Heart right ventricle (tissue), 16 donors: ENCODE measurements at regions of chr4 and their contacts with region 1.

Region 1: DNA sequence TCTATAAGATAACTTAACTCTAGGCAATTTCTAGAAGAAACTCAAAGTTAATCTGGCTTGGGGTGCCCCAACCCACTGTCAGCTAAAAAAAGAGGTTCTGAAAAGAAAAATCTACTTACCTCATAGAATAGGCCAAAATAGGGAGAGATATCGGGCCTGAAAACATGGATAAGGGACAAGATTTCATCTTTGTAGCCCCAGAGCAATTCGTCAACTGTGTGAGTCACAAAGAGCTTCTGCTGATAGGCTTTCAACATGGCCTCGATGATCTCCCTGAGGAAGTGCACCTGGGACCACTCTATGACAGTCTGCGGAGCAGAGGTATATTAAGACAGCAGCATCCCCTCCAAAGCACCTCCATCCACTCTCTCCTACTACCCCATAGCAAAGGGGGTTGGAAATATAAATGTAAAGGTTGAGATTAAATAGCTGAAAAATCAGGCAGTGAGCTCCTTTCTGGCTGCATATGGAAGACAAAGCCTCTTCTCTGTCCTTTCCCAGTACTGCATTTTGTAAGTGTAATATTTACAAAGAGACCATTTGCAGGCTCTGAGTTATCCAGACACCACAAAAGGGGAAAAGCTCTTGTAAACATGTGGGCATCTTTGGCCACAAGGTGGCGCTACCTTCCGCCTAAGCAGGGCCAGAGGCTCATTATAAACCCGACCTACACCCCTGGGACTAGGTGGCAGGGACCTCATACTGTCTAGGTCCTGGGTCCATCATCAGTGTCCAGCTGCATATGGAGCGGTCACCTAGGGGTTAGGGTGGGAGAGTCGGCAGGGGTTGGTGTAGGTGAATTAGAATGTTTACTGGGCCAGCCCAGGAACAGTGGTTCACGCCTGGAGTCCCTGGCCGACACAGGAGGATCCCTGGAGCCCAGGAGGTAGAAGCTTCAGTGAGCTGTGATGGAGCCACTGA is 31.5 kb upstream of the NUP54 start:
- DNase-seq: peak; percentile 82 to 83
- ATAC-seq: peak; percentile 80 to 92 (median 87)
- H3K4me3 ChIP-seq: no peak overlapping the region
- H3K27ac ChIP-seq: peak overlapping the region in 2 of 10 donors; percentile 32 to 55
- H3K4me1 ChIP-seq: peaks cover 0 to 39% (median 30%) of the 10 kb centered on the region in 9 donors
- H3K27me3 ChIP-seq: no peaks in the 10 kb centered on the region
- CTCF ChIP-seq: peak; percentile 87 to 97 (median 93)

Region 2: GRCh38 chr4:75769036-75769435 is 410.6 kb before region 1 on chr4:
- intact Hi-C with region 1: no loop called
- DNase-seq: no peak
- ATAC-seq: no peak
- H3K4me3 ChIP-seq: no peak overlapping the region
- H3K27ac ChIP-seq: no peak overlapping the region
- H3K4me1 ChIP-seq: peaks cover 0 to 11% (median 0%) of the 10 kb centered on the region in 9 donors
- H3K27me3 ChIP-seq: no peaks in the 10 kb centered on the region
- CTCF ChIP-seq: no peak

Region 3: DNA sequence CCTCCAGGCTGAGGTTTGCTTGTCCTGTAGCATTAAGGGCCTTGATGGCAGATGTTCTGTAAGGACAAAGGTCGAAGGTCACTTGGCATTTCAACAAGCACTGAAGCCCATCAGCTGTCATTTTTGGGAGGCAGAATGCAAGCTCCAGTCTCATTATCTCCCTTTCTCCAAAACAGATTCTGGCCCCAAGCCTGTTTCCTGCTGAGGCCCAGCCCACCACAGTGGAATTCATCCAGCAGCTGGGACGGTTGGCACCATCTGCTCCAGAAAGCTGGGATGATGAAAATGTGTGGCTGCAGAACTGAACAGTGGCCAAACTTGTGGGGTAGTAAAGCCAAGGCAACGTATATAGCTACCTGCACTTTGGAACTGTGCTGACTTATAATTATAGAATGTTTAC is 259.7 kb before region 1 on chr4:
- intact Hi-C with region 1: no loop called
- DNase-seq: peak in 1 of 2 donors; percentile 10
- ATAC-seq: no peak
- H3K4me3 ChIP-seq: no peak overlapping the region
- H3K27ac ChIP-seq: no peak overlapping the region
- H3K4me1 ChIP-seq: peaks cover 0 to 13% (median 0%) of the 10 kb centered on the region in 9 donors
- H3K27me3 ChIP-seq: no peaks in the 10 kb centered on the region
- CTCF ChIP-seq: no peak

Region 4: GRCh38 chr4:76246025-76246424 is 66.4 kb after region 1 on chr4:
- intact Hi-C with region 1: loop called in 5 of 10 experiments (anchors 5 to 10 kb)
- DNase-seq: no peak
- ATAC-seq: peak in 2 of 8 donors; percentile 47 to 68
- H3K4me3 ChIP-seq: no peak overlapping the region
- H3K27ac ChIP-seq: no peak overlapping the region
- H3K4me1 ChIP-seq: peaks cover 0 to 5% (median 2%) of the 10 kb centered on the region in 9 donors
- H3K27me3 ChIP-seq: peaks cover 0 to 29% (median 7%) of the 10 kb centered on the region in 7 donors
- CTCF ChIP-seq: peak in 1 of 9 donors; percentile 17

Region 5: DNA sequence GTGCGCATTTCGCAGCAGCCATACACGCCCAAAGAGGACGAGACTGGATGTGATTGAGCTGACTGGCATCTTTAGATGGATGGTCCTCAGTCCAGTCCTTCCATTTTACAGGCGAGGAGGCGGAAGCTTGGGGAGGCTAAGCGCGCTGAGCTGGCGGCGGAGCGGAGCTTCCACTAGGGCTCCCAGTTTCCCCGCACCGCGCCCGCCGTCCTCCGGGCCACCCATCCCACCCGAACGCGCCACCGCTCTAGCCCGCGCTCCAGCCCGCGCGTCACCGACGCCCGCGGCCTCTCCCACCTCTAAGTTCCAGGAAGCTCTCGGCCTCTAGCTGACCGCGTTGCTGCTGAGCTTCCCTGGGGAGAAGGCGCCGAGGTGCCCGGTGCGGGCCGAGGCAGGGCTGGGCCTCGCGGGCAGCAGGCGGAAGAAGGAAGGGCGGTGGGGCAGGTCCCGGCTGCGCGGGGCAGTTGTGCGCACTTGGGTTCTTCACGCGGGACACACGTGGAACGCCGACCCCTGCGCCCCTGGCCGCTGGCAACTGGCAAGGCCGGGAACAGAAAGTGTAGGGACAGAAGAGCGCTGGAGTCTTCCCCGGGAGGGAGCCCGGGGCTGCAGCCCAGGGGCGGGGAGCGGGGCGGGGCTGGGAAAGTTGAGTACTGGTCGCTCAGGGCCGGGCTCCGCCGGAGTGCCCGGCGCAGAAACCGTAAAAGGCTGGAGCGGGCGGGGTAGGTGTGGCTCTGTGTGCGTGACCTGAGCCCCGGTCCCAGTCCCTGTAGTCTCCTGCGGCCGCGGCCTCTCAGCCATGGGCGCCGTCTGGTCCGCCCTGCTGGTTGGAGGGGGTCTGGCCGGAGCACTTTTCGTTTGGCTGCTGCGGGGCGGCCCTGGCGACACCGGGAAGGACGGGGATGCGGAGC is 126.6 kb after region 1 on chr4 and contains the start of gene STBD1:
- intact Hi-C with region 1: loop called in 6 of 10 experiments (anchors 2 to 5 kb)
- DNase-seq: peak; percentile 74 to 85
- ATAC-seq: peak; percentile 85 to 94 (median 88)
- H3K4me3 ChIP-seq: peak within 1 kb of the TSS; percentile 57 to 90 (median 76)
- H3K27ac ChIP-seq: peak within 1 kb of the TSS; percentile 69 to 97 (median 91)
- H3K4me1 ChIP-seq: peaks cover 0 to 56% (median 37%) of the 10 kb centered on the region in 9 donors
- H3K27me3 ChIP-seq: peaks cover 0 to 7% (median 0%) of the 10 kb centered on the region in 7 donors
- CTCF ChIP-seq: peak in 2 of 9 donors; percentile 8 to 21
- total RNA-seq, gene STBD1: 14.8 to 53.7 (median 22.6) TPM

Region 6: GRCh38 chr4:76377911-76378310 is 198.3 kb after region 1 on chr4:
- intact Hi-C with region 1: loop called in 2 of 10 experiments (anchors 5 kb)
- DNase-seq: no peak
- ATAC-seq: peak in 1 of 8 donors; percentile 20
- H3K4me3 ChIP-seq: no peak overlapping the region
- H3K27ac ChIP-seq: no peak overlapping the region
- H3K4me1 ChIP-seq: peaks cover 0 to 7% (median 0%) of the 10 kb centered on the region in 9 donors
- H3K27me3 ChIP-seq: no peaks in the 10 kb centered on the region
- CTCF ChIP-seq: peak in 7 of 9 donors; percentile 18 to 56 (median 50)

Region 7: GRCh38 chr4:76430519-76431388 is 251.1 kb after region 1 on chr4:
- intact Hi-C with region 1: loop called in 1 of 10 experiments (anchors 5 kb)
- DNase-seq: no peak
- ATAC-seq: no peak
- H3K4me3 ChIP-seq: no peak overlapping the region
- H3K27ac ChIP-seq: no peak overlapping the region
- H3K4me1 ChIP-seq: peaks cover 0 to 13% (median 0%) of the 10 kb centered on the region in 9 donors
- H3K27me3 ChIP-seq: peaks cover 0 to 10% (median 5%) of the 10 kb centered on the region in 7 donors
- CTCF ChIP-seq: peak; percentile 24 to 83 (median 66)